ENCODE measurements at regions of chr19 and their contacts with region 1.

Region 1: DNA sequence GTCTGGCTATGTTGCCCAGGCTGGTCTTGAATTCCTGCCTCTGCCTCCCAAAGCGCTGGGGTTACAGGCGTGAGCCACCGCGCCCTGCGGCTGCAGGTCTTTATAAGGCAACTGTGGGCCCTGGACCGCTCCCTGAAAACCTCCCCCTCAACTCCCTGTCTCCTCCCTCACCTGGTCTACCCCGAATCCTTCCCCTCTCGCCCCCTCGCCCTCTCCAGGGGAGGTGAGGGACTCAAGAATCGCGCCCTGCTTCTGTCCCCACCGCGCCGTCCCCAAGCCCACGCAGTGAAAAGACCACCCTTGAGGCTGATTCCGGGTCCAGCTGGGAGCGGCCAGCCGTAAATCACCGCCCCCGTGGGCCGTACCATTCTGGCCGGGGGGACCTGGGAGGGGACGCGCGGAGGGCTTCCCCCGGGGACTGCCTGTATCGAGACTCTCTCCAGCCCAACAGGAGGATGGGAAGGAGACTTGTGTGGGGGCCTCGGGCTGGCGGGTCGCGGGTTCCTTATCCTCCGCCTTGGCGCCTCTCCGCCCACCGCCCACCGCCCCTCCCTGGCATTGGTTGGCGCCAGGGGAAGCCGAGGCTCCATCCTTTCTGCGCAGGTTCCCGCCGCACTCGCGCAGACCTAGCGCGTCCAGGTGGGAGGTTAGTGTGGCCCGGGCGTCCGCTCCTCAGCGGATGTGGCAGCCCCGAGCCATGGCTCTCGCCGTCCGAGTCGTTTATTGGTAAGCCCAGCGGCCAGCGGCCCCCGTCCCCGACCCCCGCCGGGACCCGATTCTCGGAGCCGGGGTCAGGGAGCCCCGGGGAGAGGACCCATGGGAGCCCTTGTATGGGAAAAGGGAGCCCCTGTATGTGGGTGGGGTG is at the start of gene SELENOW:
- DNase-seq: peak; percentile 88
- total RNA-seq, gene SELENOW: 944 TPM

Region 2: GRCh38 chr19:47719047-47719859 is 59.1 kb before region 1 on chr19:
- intact Hi-C with region 1: loop called (anchors 1 kb)
- DNase-seq: peak; percentile 89

Measured in cardiac septum (tissue), 1 donor.